ENCODE measurements at regions of chr9 and their contacts with region 1.

Region 1: DNA sequence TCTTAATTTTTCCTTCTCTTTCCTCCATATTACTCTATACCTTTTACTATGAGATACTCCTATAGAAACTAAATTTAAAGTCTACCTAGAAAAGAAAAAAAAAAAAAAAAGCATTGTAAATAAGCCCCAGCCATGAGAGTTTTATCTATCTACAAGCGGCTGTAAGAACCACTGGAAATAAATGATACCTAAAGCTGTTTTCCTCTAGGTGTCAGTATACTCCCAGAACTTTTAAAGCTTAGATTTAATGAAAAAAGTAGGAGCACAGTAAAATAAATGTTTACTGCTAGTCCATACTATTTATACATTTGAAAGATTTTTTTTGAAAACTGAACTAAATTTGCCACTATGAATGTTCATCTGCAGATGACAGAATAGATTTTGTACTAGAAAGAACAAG is 26.2 kb downstream of the TYRP1 start:
- DNase-seq: peak; percentile 24
- ATAC-seq: peak; percentile 66
- H3K4me3 ChIP-seq: no peak overlapping the region
- H3K27ac ChIP-seq: no peak overlapping the region
- H3K4me1 ChIP-seq: no peaks in the 10 kb centered on the region
- H3K27me3 ChIP-seq: no peaks in the 10 kb centered on the region
- CTCF ChIP-seq: peak; percentile 31 to 65 (median 58); a peak in 5 of 6 replicates
- POLR2A ChIP-seq: no peak
- RAD21 ChIP-seq: peak; percentile 73

Region 2: GRCh38 chr9:12813960-12814876 is 94.8 kb after region 1 on chr9:
- CTCF ChIA-PET with region 1: interaction called, 7 read pairs
- POLR2A ChIA-PET with region 1: interaction called, 3 read pairs
- RAD21 ChIA-PET with region 1: no interaction called
- intact Hi-C with region 1: loop called (anchors 5 kb)
- DNase-seq: peak; percentile 97
- ATAC-seq: peak; percentile 90
- H3K4me3 ChIP-seq: peak overlapping the region; percentile 32 to 45
- H3K27ac ChIP-seq: peak overlapping the region; percentile 78
- H3K4me1 ChIP-seq: peaks cover 29 to 43% of the 10 kb centered on the region in 2 experiments; a peak in 3 of 4 replicates
- H3K27me3 ChIP-seq: no peaks in the 10 kb centered on the region
- CTCF ChIP-seq: peak in 2 of 3 experiments; percentile 36 to 46; a peak in 4 of 6 replicates
- POLR2A ChIP-seq: no peak
- RAD21 ChIP-seq: peak; percentile 19

Region 3: GRCh38 chr9:12972608-12973589 is 253.5 kb after region 1 on chr9:
- CTCF ChIA-PET with region 1: interaction called, 3 read pairs
- POLR2A ChIA-PET with region 1: no interaction called
- RAD21 ChIA-PET with region 1: no interaction called
- intact Hi-C with region 1: loop called (anchors 5 kb)
- DNase-seq: no peak
- ATAC-seq: 0 out of 2 replicates have a peak, but pooled peaks have one; percentile 53
- H3K4me3 ChIP-seq: no peak overlapping the region
- H3K27ac ChIP-seq: no peak overlapping the region
- H3K4me1 ChIP-seq: no peaks in the 10 kb centered on the region
- H3K27me3 ChIP-seq: no peaks in the 10 kb centered on the region
- CTCF ChIP-seq: no peak
- POLR2A ChIP-seq: no peak
- RAD21 ChIP-seq: no peak

Region 4: GRCh38 chr9:13033959-13034693 is 314.7 kb after region 1 on chr9:
- CTCF ChIA-PET with region 1: interaction called, 10 read pairs
- POLR2A ChIA-PET with region 1: no interaction called
- RAD21 ChIA-PET with region 1: no interaction called
- intact Hi-C with region 1: loop called (anchors 5 kb)
- DNase-seq: peak; percentile 51
- ATAC-seq: peak; percentile 97
- H3K4me3 ChIP-seq: no peak overlapping the region
- H3K27ac ChIP-seq: no peak overlapping the region
- H3K4me1 ChIP-seq: no peaks in the 10 kb centered on the region; a peak in 1 of 4 replicates
- H3K27me3 ChIP-seq: peaks cover 4% of the 10 kb centered on the region; the same call in 1 of the 2 replicates
- CTCF ChIP-seq: peak; percentile 46 to 78 (median 66); a peak in 5 of 6 replicates
- POLR2A ChIP-seq: no peak
- RAD21 ChIP-seq: peak; percentile 86

Measured in HCT116 (cell line).